Activated CD8-positive, alpha-beta T cell treated with anti-CD3 and anti-CD28 coated beads, Interleukin-2, amount 10 ng/mL, durations not matched to agents 7 days and 5 days (primary cell): ENCODE measurements at regions of chr16 and their contacts with region 1.

Region 1: DNA sequence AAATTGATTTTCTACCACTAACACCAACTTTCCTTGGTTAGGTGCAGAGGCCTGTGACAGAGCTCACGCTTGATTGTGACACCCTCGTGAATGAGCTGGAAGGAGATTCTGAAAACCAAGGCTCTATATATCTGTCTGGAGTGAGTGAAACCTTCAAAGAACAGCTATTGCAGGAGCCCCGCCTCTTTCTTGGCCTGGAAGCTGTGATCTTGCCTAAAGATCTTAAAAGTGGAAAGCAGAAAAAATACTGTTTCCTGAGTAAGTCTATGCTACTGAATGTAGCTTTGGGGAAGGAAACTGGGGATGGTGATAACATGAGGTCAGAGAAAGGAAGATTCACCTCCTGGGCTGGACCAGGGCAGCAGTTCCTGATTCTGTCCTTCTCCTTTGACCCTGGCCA is 38.3 kb downstream of the REXO5 start:
- DNase-seq: no peak
- ATAC-seq: peak; percentile 70
- H3K4me3 Mint-ChIP-seq: no peak overlapping the region
- H3K27ac Mint-ChIP-seq: peak overlapping the region; percentile 60
- H3K4me1 Mint-ChIP-seq: peaks cover 45% of the 10 kb centered on the region
- H3K27me3 Mint-ChIP-seq: no peaks in the 10 kb centered on the region

Region 2: GRCh38 chr16:21083729-21084268 is 239.2 kb after region 1 on chr16:
- CTCF ChIA-PET with region 1: interaction called, 35 read pairs
- POLR2A ChIA-PET with region 1: no interaction called
- DNase-seq: peak; percentile 69
- ATAC-seq: peak; percentile 81
- H3K4me3 Mint-ChIP-seq: no peak overlapping the region
- H3K27ac Mint-ChIP-seq: no peak overlapping the region
- H3K4me1 Mint-ChIP-seq: no peaks in the 10 kb centered on the region
- H3K27me3 Mint-ChIP-seq: peaks cover 6% of the 10 kb centered on the region